ENCODE measurements at regions of chr11 and their contacts with region 1.

Region 1: DNA sequence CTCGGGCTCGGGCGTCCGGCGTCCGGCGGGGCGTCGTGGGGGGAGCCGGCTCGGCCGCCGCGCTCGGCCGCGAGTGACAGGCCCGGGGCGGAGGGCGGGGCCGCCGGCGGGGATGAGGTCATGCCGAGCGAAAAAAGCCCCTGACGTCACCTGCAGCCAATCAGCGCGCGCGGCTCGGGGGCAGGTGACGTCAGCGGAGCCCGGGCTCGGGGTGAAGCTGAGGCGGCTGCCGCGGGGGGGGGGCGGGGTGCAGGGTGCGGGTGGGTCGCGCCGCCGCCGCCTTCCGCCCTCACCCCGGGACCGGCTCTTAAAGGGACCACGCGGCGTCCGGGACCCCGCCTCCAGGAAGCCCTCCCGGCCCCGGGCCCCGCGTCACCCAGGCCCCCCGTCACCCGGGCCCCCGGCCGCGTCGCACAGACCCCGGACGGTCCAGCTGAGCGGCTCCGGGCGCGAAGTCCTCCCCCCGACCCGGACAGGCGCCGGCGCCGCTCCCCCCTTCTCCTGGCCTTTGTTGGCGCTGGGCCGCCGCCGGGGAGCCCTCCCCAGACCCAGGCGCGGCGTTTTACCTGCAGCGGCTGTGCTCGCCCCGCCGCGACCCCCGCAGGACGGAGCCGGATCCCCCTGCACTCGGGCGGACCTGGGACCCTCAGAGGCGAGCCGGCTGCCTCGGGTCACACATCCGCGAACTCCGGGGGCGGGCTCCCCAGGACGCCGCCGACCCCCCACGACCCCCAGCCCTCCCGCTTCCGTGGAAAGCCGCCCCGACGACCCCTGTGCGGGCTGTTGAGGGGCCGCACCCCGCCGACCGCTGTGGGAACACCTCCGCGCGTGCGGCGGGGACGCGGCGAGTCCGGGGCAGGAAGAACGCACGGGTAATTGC is at the start of gene DUSP8:
- DNase-seq: peak; percentile 94 to 96 (median 95)
- ATAC-seq: peak; percentile 75 to 80 (median 78)
- H3K4me3 ChIP-seq: peak within 1 kb of the TSS; percentile 55 to 85 (median 78)
- H3K27ac ChIP-seq: peak within 1 kb of the TSS; percentile 57 to 93 (median 84)
- H3K4me1 ChIP-seq: peaks cover 2 to 65% (median 33%) of the 10 kb centered on the region in 12 donors
- H3K27me3 ChIP-seq: peaks cover 0 to 25% (median 0%) of the 10 kb centered on the region in 9 donors
- CTCF ChIP-seq: no peak
- POLR2A ChIP-seq: peak in 1 of 2 donors; percentile 47
- total RNA-seq, gene DUSP8: 9.8 to 29.9 (median 17.1) TPM

Region 2: DNA sequence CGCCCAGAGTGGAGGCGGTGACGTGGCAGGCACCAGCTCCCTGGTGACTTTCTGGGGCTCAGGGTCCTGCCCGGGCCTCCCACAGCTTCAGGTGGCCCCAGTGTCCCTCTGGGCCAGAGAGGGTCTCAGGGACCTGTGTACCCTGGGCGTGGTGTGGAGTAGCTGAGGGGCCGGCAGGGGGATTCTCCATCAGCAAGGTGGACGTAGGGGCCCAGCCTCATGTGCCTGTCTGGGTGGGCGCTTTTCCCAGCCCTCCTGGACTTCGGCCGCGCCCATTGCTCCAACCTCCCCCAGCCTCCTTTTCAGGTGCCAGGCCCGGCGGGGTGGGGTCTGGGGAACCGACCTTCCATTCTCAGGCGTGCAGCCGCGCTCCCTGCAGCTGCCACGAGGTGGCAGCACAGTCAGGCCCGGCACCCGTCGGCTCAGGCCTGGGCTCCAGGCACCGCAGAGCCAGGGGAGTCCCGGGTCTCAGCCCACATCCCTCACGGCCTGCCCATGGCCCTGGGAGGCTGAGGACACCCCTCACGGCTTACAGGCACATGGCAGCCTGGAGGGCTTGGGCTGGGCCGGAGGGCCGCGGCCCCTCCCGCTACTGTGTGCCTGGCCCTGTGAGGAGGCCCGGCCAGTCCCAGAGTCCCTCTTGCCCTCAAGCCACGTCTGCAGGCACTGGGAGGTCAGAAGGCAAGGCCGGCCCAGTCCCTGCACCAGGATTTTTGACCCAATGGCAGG is 369.5 kb before region 1 on chr11:
- intact Hi-C with region 1: loop called in 7 of 10 experiments (anchors 2 to 10 kb)
- DNase-seq: peak in 4 of 5 donors; percentile 19 to 81 (median 55)
- ATAC-seq: peak; percentile 28 to 84 (median 72)
- H3K4me3 ChIP-seq: no peak overlapping the region
- H3K27ac ChIP-seq: no peak overlapping the region
- H3K4me1 ChIP-seq: peaks cover 0 to 8% (median 0%) of the 10 kb centered on the region in 12 donors
- H3K27me3 ChIP-seq: peaks cover 0 to 35% (median 14%) of the 10 kb centered on the region in 9 donors
- CTCF ChIP-seq: peak; percentile 75 to 94 (median 91)
- POLR2A ChIP-seq: no peak

Region 3: GRCh38 chr11:1309498-1310317 is 262.7 kb before region 1 on chr11 and contains the start of gene TOLLIP:
- intact Hi-C with region 1: loop called in 1 of 10 experiments (anchors 5 kb)
- DNase-seq: peak; percentile 96 to 99 (median 97)
- ATAC-seq: peak; percentile 96 to 99 (median 97)
- H3K4me3 ChIP-seq: peak within 1 kb of the TSS; percentile 58 to 98 (median 85)
- H3K27ac ChIP-seq: peak within 1 kb of the TSS; percentile 86 to 97 (median 94)
- H3K4me1 ChIP-seq: peaks cover 0 to 43% (median 27%) of the 10 kb centered on the region in 12 donors
- H3K27me3 ChIP-seq: no peaks in the 10 kb centered on the region
- CTCF ChIP-seq: peak in 7 of 12 donors; percentile 8 to 56 (median 41)
- POLR2A ChIP-seq: peak; percentile 6 to 92
- total RNA-seq, gene TOLLIP: 36.9 to 57.2 (median 44.9) TPM

Region 4: GRCh38 chr11:1534682-1535081 is 37.8 kb before region 1 on chr11:
- intact Hi-C with region 1: loop called in 1 of 10 experiments (anchors 5 kb)
- DNase-seq: peak in 1 of 5 donors; percentile 47
- ATAC-seq: peak in 1 of 4 donors; percentile 36
- H3K4me3 ChIP-seq: no peak overlapping the region
- H3K27ac ChIP-seq: peak overlapping the region in 6 of 12 donors; percentile 3 to 87 (median 47)
- H3K4me1 ChIP-seq: peaks cover 24 to 79% (median 71%) of the 10 kb centered on the region in 12 donors
- H3K27me3 ChIP-seq: no peaks in the 10 kb centered on the region
- CTCF ChIP-seq: no peak
- POLR2A ChIP-seq: no peak

Region 5: DNA sequence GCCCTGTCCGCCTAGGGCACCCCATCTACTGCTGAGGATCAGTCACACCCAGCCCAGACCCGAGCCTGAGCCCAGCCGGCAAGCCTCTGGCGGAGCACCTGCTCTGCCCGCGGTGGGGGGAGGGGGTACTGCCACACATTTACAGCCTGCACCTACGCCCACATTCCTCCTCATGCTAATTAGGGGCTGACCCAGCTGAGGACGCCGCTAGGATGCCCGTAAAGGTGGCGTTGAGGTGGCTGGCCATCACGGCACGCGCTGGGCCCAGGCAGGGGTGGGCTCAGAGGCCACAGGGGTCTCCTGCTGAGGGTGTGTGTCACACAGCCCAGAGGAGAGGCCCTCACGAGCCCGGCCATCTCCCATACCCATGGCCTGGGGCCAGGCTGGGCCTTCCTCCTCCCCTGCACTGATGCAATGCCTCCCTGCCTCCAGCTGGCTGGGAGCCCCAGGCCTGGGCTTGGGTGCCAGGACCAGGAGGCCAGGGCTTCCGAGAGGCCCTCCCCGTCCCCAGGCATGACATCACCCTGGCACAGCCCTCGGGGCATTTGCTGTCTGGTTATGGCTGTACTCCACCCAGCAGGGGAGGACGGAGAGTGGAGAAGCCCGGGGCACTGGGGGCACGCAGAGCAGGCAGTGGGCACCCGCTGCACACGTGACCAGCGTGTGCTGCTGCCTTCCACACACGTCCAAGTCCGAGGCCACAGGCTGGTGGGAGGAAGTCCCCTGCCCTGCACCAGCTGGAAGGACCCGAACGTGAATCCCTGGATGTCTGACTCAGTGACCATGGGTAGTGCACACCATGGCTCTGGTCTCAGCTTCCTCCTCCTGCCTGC is 13.1 kb before region 1 on chr11:
- intact Hi-C with region 1: loop called in 1 of 10 experiments (anchors 2 kb)
- DNase-seq: peak; percentile 90 to 96 (median 91)
- ATAC-seq: peak; percentile 83 to 90 (median 86)
- H3K4me3 ChIP-seq: no peak overlapping the region
- H3K27ac ChIP-seq: peak overlapping the region; percentile 78 to 99 (median 88)
- H3K4me1 ChIP-seq: peaks cover 4 to 57% (median 32%) of the 10 kb centered on the region in 12 donors
- H3K27me3 ChIP-seq: no peaks in the 10 kb centered on the region
- CTCF ChIP-seq: no peak
- POLR2A ChIP-seq: no peak

Measured in heart left ventricle (tissue), 16 donors.